Naive thymus-derived CD4-positive, alpha-beta T cell (primary cell): ENCODE measurements at regions of chr4 and their contacts with region 1.

Region 1: DNA sequence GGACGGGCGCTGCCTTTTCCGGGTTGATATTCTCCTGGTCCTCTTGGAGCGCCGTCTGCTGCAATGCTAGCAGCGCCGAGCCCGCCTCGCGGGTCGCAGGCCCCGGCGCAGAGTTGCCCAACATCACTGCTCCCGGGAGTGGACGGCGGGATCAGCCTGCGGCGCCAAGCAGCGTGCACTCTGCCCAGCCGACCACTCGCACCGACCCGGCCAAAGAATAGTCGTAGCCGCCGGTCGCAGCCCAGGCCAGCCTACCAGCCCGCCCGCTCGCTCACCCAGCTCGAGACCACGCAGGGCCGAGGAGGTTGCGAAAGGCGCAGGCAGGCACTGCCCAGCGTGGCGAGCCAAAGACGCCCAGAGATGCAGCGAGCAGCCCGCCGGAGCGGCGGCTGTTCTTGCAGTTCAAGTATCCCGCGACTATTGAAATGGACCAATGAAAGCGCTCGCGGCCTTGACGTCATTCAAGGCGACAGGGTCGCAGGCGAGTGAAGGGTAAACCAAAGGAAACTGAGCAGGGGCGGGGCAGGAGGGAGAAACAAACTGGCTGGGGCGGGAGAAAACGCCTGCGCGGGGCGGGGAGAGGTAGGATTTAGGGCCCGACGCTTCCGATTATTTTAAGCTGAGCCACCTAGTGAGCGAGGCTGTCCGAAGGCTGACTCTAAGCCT is at the start of gene CCNA2:
- DNase-seq: peak; percentile 86 to 95 (median 93)
- ATAC-seq: peak; percentile 99
- H3K4me3 ChIP-seq: peak within 1 kb of the TSS; percentile 85
- H3K4me3 Mint-ChIP-seq: peak within 1 kb of the TSS; percentile 85 to 100 (median 92)
- H3K27ac ChIP-seq: peak within 1 kb of the TSS; percentile 60
- H3K27ac Mint-ChIP-seq: peak within 1 kb of the TSS; percentile 72 to 97 (median 93)
- H3K4me1 ChIP-seq: peaks cover 0 to 9% of the 10 kb centered on the region in 2 donors
- H3K4me1 Mint-ChIP-seq: peaks cover 4 to 44% (median 12%) of the 10 kb centered on the region in 7 donors
- H3K27me3 ChIP-seq: no peaks in the 10 kb centered on the region
- H3K27me3 Mint-ChIP-seq: peaks cover 0 to 3% (median 0%) of the 10 kb centered on the region in 5 donors
- total RNA-seq, gene CCNA2: 0.24 to 63.7 (median 1.2) TPM

Region 2: DNA sequence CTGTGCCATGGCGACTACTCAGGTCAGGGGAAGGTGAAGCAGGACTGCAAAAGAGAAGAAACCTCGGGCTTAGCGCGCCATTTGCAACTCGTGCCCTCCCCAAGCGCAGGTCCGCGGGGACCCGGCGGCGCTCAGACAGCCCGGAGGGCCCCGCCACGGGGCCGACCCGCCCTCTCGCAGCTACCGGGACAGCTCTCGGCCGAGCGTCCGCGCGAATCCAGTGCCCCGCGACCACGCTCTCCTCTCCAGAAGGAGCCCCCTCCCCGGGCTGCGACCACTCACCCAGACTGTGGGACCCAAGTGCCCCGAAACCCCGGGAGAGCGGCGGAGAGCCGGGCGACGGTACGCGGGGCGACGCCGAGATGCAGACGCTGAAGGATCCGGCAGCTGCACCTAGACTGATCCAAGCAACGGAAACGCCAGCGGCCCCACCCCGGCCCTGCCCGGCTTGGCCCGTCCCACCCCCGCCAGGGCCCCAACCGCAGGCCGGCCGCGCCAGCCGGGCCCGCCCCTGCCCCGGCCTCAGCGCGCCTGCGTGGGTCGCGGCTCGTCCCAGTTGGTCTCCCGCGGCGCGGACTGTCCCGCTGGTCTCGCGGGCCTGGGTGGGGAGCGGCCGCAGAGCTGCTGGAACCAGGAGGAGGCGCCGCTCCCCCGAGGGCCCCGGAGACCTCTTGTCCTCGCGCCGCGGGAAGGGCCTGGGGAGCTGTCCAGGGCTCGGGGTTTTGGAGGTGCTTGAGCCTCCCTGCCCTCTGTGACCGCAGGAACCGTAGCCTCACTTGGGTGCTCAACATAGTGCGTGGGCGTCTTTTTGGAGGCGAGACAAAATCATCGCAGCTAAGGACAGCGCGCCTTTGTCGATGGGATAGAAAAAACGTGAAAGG is 126.8 kb before region 1 on chr4 and contains the start of gene ANXA5:
- CTCF ChIA-PET with region 1: no interaction called
- POLR2A ChIA-PET with region 1: interaction called, 3 read pairs
- intact Hi-C with region 1: loop called (anchors 2 to 5 kb)
- DNase-seq: peak; percentile 8 to 85 (median 41)
- ATAC-seq: peak; percentile 92
- H3K4me3 ChIP-seq: peak within 1 kb of the TSS; percentile 87
- H3K4me3 Mint-ChIP-seq: peak within 1 kb of the TSS; percentile 94 to 99 (median 97)
- H3K27ac ChIP-seq: peak within 1 kb of the TSS; percentile 39
- H3K27ac Mint-ChIP-seq: peak within 1 kb of the TSS; percentile 67 to 99 (median 87)
- H3K4me1 ChIP-seq: peaks cover 4 to 13% of the 10 kb centered on the region in 2 donors
- H3K4me1 Mint-ChIP-seq: peaks cover 12 to 43% (median 19%) of the 10 kb centered on the region in 7 donors
- H3K27me3 ChIP-seq: no peaks in the 10 kb centered on the region
- H3K27me3 Mint-ChIP-seq: peaks cover 0 to 43% (median 28%) of the 10 kb centered on the region in 5 donors
- total RNA-seq, gene ANXA5: 25.5 to 180 (median 49.5) TPM

Region 3: GRCh38 chr4:121846662-121847061 is 23.0 kb after region 1 on chr4:
- CTCF ChIA-PET with region 1: no interaction called
- POLR2A ChIA-PET with region 1: no interaction called
- intact Hi-C with region 1: no loop called
- DNase-seq: no peak
- ATAC-seq: no peak
- H3K4me3 ChIP-seq: no peak overlapping the region
- H3K4me3 Mint-ChIP-seq: no peak overlapping the region
- H3K27ac ChIP-seq: no peak overlapping the region
- H3K27ac Mint-ChIP-seq: no peak overlapping the region
- H3K4me1 ChIP-seq: no peaks in the 10 kb centered on the region
- H3K4me1 Mint-ChIP-seq: no peaks in the 10 kb centered on the region
- H3K27me3 ChIP-seq: no peaks in the 10 kb centered on the region
- H3K27me3 Mint-ChIP-seq: no peaks in the 10 kb centered on the region

Region 4: GRCh38 chr4:121869841-121870656 is 46.4 kb after region 1 on chr4 and contains the start of gene BBS7:
- CTCF ChIA-PET with region 1: no interaction called
- POLR2A ChIA-PET with region 1: interaction called, 4 read pairs
- intact Hi-C with region 1: loop called (anchors 1 kb)
- DNase-seq: peak; percentile 79 to 93 (median 89)
- ATAC-seq: peak; percentile 98
- H3K4me3 ChIP-seq: peak within 1 kb of the TSS; percentile 99
- H3K4me3 Mint-ChIP-seq: peak within 1 kb of the TSS; percentile 88 to 98 (median 97)
- H3K27ac ChIP-seq: peak within 1 kb of the TSS; percentile 77
- H3K27ac Mint-ChIP-seq: peak within 1 kb of the TSS; percentile 69 to 95 (median 90)
- H3K4me1 ChIP-seq: peaks cover 0 to 10% of the 10 kb centered on the region in 2 donors
- H3K4me1 Mint-ChIP-seq: peaks cover 9 to 17% (median 15%) of the 10 kb centered on the region in 7 donors
- H3K27me3 ChIP-seq: no peaks in the 10 kb centered on the region
- H3K27me3 Mint-ChIP-seq: peaks cover 0 to 30% (median 12%) of the 10 kb centered on the region in 5 donors
- total RNA-seq, gene BBS7: 3.7 to 13.1 (median 8.1) TPM

Region 5: DNA sequence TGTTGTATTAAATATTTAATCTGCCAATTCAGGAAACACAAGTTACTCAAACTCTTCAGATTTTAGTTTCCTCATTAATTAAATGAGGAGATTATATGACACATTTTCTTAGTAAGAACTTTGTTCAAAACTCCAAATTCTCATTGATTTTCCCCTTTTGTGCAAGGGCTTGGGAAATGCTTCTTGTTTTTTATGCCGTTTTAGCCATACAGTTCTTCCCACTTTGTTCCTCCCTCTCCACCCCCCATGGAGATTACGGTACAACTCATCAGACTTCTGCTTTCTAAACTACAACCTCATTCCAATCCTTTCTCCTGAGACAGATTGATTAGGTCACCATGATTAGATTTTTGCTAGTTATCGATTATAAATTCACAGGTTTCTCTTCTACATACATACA is 57.5 kb after region 1 on chr4:
- CTCF ChIA-PET with region 1: no interaction called
- POLR2A ChIA-PET with region 1: no interaction called
- intact Hi-C with region 1: no loop called
- DNase-seq: no peak
- ATAC-seq: no peak
- H3K4me3 ChIP-seq: no peak overlapping the region
- H3K4me3 Mint-ChIP-seq: no peak overlapping the region
- H3K27ac ChIP-seq: no peak overlapping the region
- H3K27ac Mint-ChIP-seq: no peak overlapping the region
- H3K4me1 ChIP-seq: no peaks in the 10 kb centered on the region
- H3K4me1 Mint-ChIP-seq: peaks cover 0 to 5% (median 0%) of the 10 kb centered on the region in 7 donors
- H3K27me3 ChIP-seq: no peaks in the 10 kb centered on the region
- H3K27me3 Mint-ChIP-seq: peaks cover 26 to 65% (median 39%) of the 10 kb centered on the region in 5 donors